Kidney (tissue), 22 donors: ENCODE measurements at regions of chr1 and their contacts with region 1.

Region 1: GRCh38 chr1:203216274-203217138 is 13.0 kb downstream of the CHIT1 start:
- DNase-seq: peak in 4 of 5 donors; percentile 79 to 92 (median 86)
- H3K4me3 ChIP-seq: no peak overlapping the region
- H3K27ac ChIP-seq: no peak overlapping the region
- H3K4me1 ChIP-seq: no peaks in the 10 kb centered on the region
- H3K27me3 ChIP-seq: no peaks in the 10 kb centered on the region
- CTCF ChIP-seq: peak; percentile 86

Region 2: GRCh38 chr1:203039609-203040512 is 176.6 kb before region 1 on chr1:
- intact Hi-C with region 1: loop called (anchors 5 kb)
- DNase-seq: peak in 1 of 5 donors; percentile 56
- H3K4me3 ChIP-seq: peak overlapping the region in 1 of 3 donors; percentile 9
- H3K27ac ChIP-seq: no peak overlapping the region
- H3K4me1 ChIP-seq: peaks cover 0 to 2% (median 0%) of the 10 kb centered on the region in 3 donors
- H3K27me3 ChIP-seq: no peaks in the 10 kb centered on the region
- CTCF ChIP-seq: no peak

Region 3: DNA sequence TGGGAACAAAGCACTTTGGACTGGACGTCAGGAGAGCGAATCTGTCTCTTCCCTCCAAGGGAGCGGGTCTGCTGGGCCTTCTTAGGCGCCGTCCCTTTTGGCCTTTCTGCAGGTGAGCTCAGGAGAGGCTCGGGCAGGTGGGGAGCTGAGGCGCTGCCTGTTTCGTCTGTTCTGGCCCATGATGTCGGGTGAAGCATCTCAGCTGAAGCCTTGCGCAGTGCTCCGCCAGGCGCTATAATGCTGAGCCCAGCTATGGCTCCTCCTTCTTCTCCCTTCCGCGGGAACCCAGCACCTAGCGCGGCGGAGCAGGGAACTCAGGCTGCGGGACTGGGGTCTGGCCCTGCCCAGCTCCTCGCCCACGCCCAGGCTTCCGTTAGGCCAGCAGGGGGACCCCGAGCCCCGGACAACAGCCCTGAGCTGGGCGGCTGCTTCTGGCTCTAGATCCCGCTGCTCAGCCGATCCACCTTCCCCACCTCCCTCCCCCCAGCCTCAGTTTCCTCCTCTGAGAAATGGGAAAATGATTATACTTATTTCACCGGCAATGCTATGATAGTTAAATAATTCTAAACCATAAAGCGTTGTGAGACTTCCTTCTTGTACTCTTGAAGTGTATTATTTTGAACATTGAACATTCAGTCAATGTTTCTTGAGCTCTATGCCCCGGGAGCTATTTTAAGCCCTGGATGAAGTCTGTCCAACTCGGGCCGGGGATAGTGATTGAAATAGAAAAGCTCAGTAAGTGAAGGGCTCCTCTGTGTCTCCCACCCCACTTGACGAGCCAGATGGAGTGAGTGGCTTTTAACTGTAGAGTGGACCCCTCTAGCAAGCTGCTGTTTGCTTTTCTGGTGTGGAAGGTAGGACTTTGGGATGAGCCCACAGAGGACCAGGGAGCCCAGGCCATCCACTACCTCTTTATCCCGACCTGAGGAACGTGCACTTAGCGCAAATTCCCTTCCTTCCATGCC is 98.6 kb before region 1 on chr1:
- intact Hi-C with region 1: loop called (anchors 5 kb)
- DNase-seq: peak; percentile 86 to 91 (median 91)
- H3K4me3 ChIP-seq: no peak overlapping the region
- H3K27ac ChIP-seq: no peak overlapping the region
- H3K4me1 ChIP-seq: no peaks in the 10 kb centered on the region
- H3K27me3 ChIP-seq: no peaks in the 10 kb centered on the region
- CTCF ChIP-seq: peak; percentile 72